HEK293T (cell line): ENCODE measurements at regions of chr12 and their contacts with region 1.

Region 1: DNA sequence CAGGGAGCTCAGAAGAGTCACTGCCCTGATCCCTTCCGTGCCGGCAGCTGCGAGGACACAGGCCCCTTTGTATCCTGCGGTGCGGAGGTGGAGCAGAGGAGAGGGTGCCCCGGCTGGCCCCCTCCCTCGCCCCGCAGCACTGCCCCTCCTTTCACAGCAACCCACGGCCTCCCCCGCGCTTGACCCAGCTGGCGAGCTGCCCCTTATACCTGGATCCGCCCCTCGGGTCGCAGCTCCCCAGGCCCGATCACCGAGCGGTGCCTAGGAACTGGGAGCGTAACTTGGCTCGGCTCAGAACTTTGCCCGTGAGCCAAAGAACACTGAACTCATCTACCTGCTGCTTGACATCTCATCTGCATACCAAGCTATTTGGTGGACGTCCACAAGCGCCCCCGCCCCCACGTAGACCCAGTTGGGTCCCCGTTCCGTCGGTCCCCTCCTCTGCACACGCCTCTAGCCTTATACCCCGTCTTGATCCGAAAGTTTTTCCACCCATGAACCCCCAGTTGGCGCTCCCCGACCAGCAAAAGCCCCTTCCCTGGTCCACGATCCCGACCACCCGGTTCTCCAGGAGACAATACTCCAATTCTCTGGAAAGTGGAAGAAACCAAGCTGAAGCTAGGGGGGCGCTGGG is 697 bp upstream of the DNAJC14 start:
- DNase-seq: no peak

Region 2: GRCh38 chr12:55817346-55818139 is 12.5 kb before region 1 on chr12 and contains the starts of genes ORMDL2 and SARNP:
- CTCF ChIA-PET with region 1: interaction called, 5 read pairs
- POLR2A ChIA-PET with region 1: interaction called, 109 read pairs
- DNase-seq: peak; percentile 96

Region 3: DNA sequence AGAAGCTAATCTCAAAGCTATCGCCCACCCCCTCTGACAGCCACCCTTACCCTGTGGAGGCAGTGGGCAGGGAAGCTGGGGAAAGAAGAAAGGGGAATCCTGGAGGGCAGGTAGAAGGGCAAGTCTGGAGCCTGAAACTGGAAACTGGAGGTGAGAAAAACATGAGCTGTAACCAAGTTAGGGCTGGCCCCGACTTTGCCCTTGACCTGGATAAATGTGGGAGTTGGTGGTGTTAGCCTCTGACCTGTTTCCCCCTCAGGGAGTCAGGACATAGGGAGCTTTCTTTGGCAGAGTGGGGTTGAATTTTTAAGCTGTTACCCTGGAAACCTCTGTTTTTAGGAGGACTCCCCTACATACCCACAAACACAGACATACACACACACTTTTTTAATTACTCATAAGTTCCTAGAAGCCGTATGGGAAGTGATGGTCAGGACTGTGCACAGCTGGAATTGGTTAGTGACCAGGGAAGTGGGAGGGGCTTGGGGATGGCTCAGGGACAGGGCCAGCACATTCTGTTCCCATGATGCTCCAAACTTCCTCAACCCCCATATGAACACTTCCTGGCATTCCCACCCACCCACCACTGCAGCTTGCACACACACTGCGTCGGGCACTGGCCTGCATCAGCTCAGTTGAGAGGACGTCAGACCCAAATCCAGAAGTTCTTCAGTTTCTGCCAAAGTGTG is 17.7 kb after region 1 on chr12:
- CTCF ChIA-PET with region 1: interaction called, 4 read pairs
- POLR2A ChIA-PET with region 1: interaction called, 43 read pairs
- DNase-seq: peak; percentile 25

Region 4: GRCh38 chr12:55973598-55974307 is 143.7 kb after region 1 on chr12 and contains the start of gene RAB5B:
- CTCF ChIA-PET with region 1: no interaction called
- POLR2A ChIA-PET with region 1: interaction called, 19 read pairs
- DNase-seq: peak; percentile 94